ENCODE measurements at regions of chr15 and their contacts with region 1.

Region 1: DNA sequence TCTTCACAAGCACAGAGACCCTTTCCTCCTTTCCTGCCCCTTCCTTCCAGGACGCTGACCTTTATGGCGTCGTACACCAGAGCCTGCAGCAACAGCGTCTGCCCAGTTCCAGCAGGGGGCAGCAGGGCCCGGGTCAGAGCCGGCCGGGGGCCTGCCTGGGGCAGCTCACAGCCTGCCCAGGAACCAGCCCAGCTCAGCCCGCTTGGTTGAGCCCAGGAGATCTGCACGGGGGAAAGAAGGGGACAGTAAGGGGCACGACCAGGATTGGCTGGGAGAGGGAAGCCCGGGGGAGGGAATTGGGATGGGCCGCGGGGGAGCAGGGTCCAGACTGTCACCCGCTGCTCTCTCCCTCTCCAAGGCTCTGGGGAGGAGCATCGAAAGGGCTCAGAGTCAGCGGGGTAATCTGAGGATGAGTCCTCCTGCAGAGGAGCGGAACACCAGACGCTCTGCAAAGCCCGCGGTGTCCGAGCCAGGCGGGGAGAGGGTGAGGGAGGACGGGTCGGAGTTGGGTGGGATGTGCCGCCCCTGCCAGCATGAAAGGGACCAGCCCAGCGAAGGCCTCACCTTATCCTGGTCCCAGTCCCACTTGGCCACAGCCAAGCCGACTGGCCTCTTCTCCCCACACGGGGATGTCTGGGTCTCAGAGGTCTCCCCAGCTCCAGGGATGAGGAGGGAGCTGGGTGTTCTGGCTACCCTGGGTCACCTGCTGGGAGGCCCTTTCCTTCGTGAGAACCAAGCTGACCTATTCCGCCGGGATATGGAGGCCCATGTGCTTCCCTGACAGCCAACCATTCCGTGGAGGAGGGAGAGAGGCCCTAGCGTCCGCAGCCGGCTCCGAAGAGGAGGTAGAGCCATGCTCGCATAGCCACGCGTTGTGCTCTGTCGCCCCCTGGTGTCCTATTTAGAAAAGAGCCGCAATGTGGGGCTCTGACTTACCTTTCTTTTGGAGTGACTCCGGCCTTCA is 7.4 kb upstream of the IGDCC3 start:
- DNase-seq: peak; percentile 68 to 88 (median 83)
- ATAC-seq: peak; percentile 88
- H3K4me3 ChIP-seq: peak overlapping the region; percentile 72 to 89
- H3K4me3 Mint-ChIP-seq: peak overlapping the region; percentile 90
- H3K27ac ChIP-seq: peak overlapping the region; percentile 1 to 60
- H3K27ac Mint-ChIP-seq: peak overlapping the region; percentile 18
- H3K4me1 ChIP-seq: peaks cover 7% of the 10 kb centered on the region
- H3K4me1 Mint-ChIP-seq: peaks cover 12% of the 10 kb centered on the region
- H3K27me3 ChIP-seq: no peaks in the 10 kb centered on the region
- H3K27me3 Mint-ChIP-seq: peaks cover 13% of the 10 kb centered on the region
- CTCF ChIP-seq: peak; percentile 78

Region 2: GRCh38 chr15:65054333-65055200 is 330.6 kb before region 1 on chr15:
- CTCF ChIA-PET with region 1: interaction called, 4 read pairs
- POLR2A ChIA-PET with region 1: no interaction called
- intact Hi-C with region 1: loop called in 1 of 2 experiments (anchors 1 kb)
- DNase-seq: peak in 8 of 9 experiments; percentile 21 to 66 (median 54)
- ATAC-seq: peak; percentile 54
- H3K4me3 ChIP-seq: no peak overlapping the region
- H3K4me3 Mint-ChIP-seq: no peak overlapping the region
- H3K27ac ChIP-seq: no peak overlapping the region
- H3K27ac Mint-ChIP-seq: no peak overlapping the region
- H3K4me1 ChIP-seq: peaks cover 7% of the 10 kb centered on the region
- H3K4me1 Mint-ChIP-seq: peaks cover 8% of the 10 kb centered on the region
- H3K27me3 ChIP-seq: no peaks in the 10 kb centered on the region
- H3K27me3 Mint-ChIP-seq: no peaks in the 10 kb centered on the region
- CTCF ChIP-seq: peak; percentile 69

Region 3: DNA sequence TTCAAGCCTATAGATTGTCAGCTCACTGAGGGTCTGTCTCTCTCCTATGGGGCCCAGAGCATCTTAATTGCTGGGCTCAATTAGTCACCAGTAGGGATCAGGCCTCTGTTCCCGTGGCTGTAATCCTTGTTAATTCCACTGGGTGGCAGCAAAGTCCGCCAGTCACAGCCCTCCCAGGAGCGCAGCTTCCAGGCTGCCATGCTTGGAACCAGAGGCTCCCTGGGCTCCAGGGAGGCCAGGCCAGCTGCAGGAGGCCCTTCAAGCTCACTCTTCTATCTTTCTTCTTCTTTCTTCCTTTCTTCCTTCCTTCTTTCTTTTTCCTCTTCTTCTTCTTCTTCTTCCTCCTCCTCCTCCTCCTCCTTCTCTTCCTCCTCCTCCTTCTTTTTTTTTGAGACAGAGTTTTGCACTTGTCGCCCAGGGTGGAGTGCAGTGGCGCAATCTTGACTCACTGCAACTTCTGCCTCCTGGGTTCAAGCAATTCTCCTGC is 66.3 kb before region 1 on chr15:
- CTCF ChIA-PET with region 1: interaction called, 147 read pairs
- POLR2A ChIA-PET with region 1: interaction called, 7 read pairs
- intact Hi-C with region 1: loop called (anchors 1 kb)
- DNase-seq: peak; percentile 60 to 83 (median 75)
- ATAC-seq: peak; percentile 100
- H3K4me3 ChIP-seq: no peak overlapping the region
- H3K4me3 Mint-ChIP-seq: no peak overlapping the region
- H3K27ac ChIP-seq: no peak overlapping the region
- H3K27ac Mint-ChIP-seq: no peak overlapping the region
- H3K4me1 ChIP-seq: no peaks in the 10 kb centered on the region
- H3K4me1 Mint-ChIP-seq: peaks cover 2% of the 10 kb centered on the region
- H3K27me3 ChIP-seq: no peaks in the 10 kb centered on the region
- H3K27me3 Mint-ChIP-seq: peaks cover 4% of the 10 kb centered on the region
- CTCF ChIP-seq: peak; percentile 86

Region 4: GRCh38 chr15:65368302-65369211 is 16.6 kb before region 1 on chr15:
- CTCF ChIA-PET with region 1: interaction called, 35 read pairs
- POLR2A ChIA-PET with region 1: no interaction called
- intact Hi-C with region 1: no loop called
- DNase-seq: no peak
- ATAC-seq: no peak
- H3K4me3 ChIP-seq: no peak overlapping the region
- H3K4me3 Mint-ChIP-seq: no peak overlapping the region
- H3K27ac ChIP-seq: no peak overlapping the region
- H3K27ac Mint-ChIP-seq: no peak overlapping the region
- H3K4me1 ChIP-seq: no peaks in the 10 kb centered on the region
- H3K4me1 Mint-ChIP-seq: no peaks in the 10 kb centered on the region
- H3K27me3 ChIP-seq: no peaks in the 10 kb centered on the region
- H3K27me3 Mint-ChIP-seq: peaks cover 12% of the 10 kb centered on the region
- CTCF ChIP-seq: no peak